ENCODE measurements at regions of chr11 and their contacts with region 1.

Region 1: GRCh38 chr11:78139422-78140391 is at the start of gene ALG8:
- DNase-seq: peak; percentile 89 to 94
- ATAC-seq: peak; percentile 99
- H3K4me3 ChIP-seq: peak within 1 kb of the TSS; percentile 71 to 97 (median 90)
- H3K27ac ChIP-seq: peak within 1 kb of the TSS; percentile 72 to 87 (median 80)
- H3K4me1 ChIP-seq: peaks cover 15 to 18% of the 10 kb centered on the region in 2 donors
- H3K27me3 ChIP-seq: no peaks in the 10 kb centered on the region
- CTCF ChIP-seq: no peak
- POLR2A ChIP-seq: peak; percentile 34 to 56
- total RNA-seq, gene ALG8: 9.0 to 12.9 (median 10.9) TPM

Region 2: GRCh38 chr11:77820563-77821348 is 319.0 kb before region 1 on chr11 and contains the starts of genes AAMDC and RSF1:
- in situ Hi-C with region 1: no loop called
- intact Hi-C with region 1: loop called (anchors 1 kb)
- DNase-seq: peak; percentile 98 to 99
- ATAC-seq: peak; percentile 84
- H3K4me3 ChIP-seq: peak within 1 kb of the TSS; percentile 92 to 97 (median 96)
- H3K27ac ChIP-seq: peak within 1 kb of the TSS; percentile 98 to 99 (median 99)
- H3K4me1 ChIP-seq: peaks cover 51 to 53% of the 10 kb centered on the region in 2 donors
- H3K27me3 ChIP-seq: no peaks in the 10 kb centered on the region
- CTCF ChIP-seq: peak; percentile 25 to 71 (median 58)
- POLR2A ChIP-seq: peak; percentile 82 to 96
- total RNA-seq, gene AAMDC: 32.4 to 70.3 (median 48.3) TPM
- total RNA-seq, gene RSF1: 17.9 to 48.4 (median 45.7) TPM

Region 3: DNA sequence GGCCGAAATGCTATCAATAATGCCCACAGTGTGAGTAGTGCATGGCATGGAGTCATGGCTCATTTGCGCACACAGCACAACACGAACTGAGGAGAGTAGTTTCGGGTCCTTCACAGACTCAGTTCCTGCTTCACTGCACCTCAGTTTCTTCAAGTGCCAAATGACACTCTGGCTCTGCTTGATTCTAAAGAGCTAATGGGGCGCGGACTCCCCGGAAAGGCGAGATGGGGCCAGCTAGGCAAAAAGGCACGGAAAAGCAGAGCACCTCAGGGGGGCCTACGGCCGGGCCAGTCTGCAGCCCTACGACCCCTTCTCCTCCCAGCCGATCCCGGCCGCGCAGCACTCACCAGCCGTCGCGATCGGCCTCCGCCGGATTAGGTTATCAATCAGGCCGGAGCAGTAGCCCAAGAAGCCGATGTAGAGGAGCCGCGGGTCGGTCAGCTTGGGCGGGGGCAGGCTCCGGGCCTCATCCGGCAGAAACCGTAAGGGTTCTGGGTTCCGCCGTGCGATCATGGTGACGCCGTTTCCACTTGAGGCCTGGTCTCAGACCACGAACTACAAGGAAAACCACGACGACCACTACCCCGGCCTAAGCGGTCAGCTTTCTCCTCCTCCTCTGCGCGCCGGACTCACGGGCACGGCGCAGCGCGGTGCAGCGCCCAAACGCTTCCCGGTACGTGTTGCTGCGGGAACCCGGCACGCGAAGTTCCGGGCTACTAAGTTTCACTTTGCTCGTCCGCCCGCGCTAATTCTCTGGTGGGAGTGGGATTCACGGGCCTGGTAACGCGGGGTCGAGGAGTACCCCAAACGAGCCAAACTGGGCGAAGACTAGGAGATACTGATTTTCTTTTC is 60.2 kb before region 1 on chr11 and contains the start of gene NDUFC2:
- in situ Hi-C with region 1: no loop called
- intact Hi-C with region 1: loop called (anchors 2 kb)
- DNase-seq: peak; percentile 60 to 71
- ATAC-seq: peak; percentile 93 to 95
- H3K4me3 ChIP-seq: peak within 1 kb of the TSS; percentile 67 to 97 (median 89)
- H3K27ac ChIP-seq: peak within 1 kb of the TSS; percentile 85 to 95 (median 88)
- H3K4me1 ChIP-seq: peaks cover 32 to 45% of the 10 kb centered on the region in 2 donors
- H3K27me3 ChIP-seq: no peaks in the 10 kb centered on the region
- CTCF ChIP-seq: no peak
- POLR2A ChIP-seq: peak; percentile 47 to 57
- total RNA-seq, gene NDUFC2: 83.7 to 207 (median 156) TPM

Region 4: GRCh38 chr11:78416305-78417178 is 276.8 kb after region 1 on chr11:
- in situ Hi-C with region 1: loop called in 1 of 4 experiments (anchors 25 kb)
- intact Hi-C with region 1: loop called (anchors 5 kb)
- DNase-seq: peak; percentile 66 to 78
- ATAC-seq: peak; percentile 63 to 76
- H3K4me3 ChIP-seq: peak overlapping the region; percentile 65 to 82 (median 70)
- H3K27ac ChIP-seq: peak overlapping the region; percentile 81 to 96 (median 85)
- H3K4me1 ChIP-seq: peaks cover 15% of the 10 kb centered on the region in 2 donors
- H3K27me3 ChIP-seq: peaks cover 0 to 4% (median 0%) of the 10 kb centered on the region in 3 donors
- CTCF ChIP-seq: peak; percentile 18 to 45 (median 33)
- POLR2A ChIP-seq: peak; percentile 75 to 92

Region 5: GRCh38 chr11:78574386-78575381 is 435.0 kb after region 1 on chr11 and contains the start of gene NARS2:
- in situ Hi-C with region 1: loop called in 3 of 4 experiments (anchors 25 kb)
- intact Hi-C with region 1: no loop called
- DNase-seq: peak; percentile 93 to 95
- ATAC-seq: peak; percentile 98 to 99
- H3K4me3 ChIP-seq: peak within 1 kb of the TSS; percentile 71 to 99 (median 88)
- H3K27ac ChIP-seq: peak within 1 kb of the TSS; percentile 89 to 93 (median 91)
- H3K4me1 ChIP-seq: peaks cover 4 to 16% of the 10 kb centered on the region in 2 donors
- H3K27me3 ChIP-seq: no peaks in the 10 kb centered on the region
- CTCF ChIP-seq: no peak
- POLR2A ChIP-seq: peak; percentile 61 to 70
- total RNA-seq, gene NARS2: 12.9 to 29.1 (median 18.7) TPM